Activated CD4-positive, alpha-beta memory T cell treated with anti-CD3 and anti-CD28 coated beads, Interleukin-2, amount 10 ng/mL, durations not matched to agents 7 days and 5 days (primary cell): ENCODE measurements at regions of chr1 and their contacts with region 1.

Region 1: GRCh38 chr1:52825868-52826267 is 16.7 kb upstream of the ZYG11A start:
- DNase-seq: no peak
- H3K4me3 Mint-ChIP-seq: no peak overlapping the region
- H3K27ac Mint-ChIP-seq: no peak overlapping the region
- H3K4me1 Mint-ChIP-seq: no peaks in the 10 kb centered on the region
- H3K27me3 Mint-ChIP-seq: no peaks in the 10 kb centered on the region

Region 2: GRCh38 chr1:52842643-52843309 is 16.9 kb after region 1 on chr1 and contains the start of gene ZYG11A:
- CTCF ChIA-PET with region 1: interaction called, 12 read pairs
- POLR2A ChIA-PET with region 1: no interaction called
- DNase-seq: peak; percentile 81
- H3K4me3 Mint-ChIP-seq: peak within 1 kb of the TSS; percentile 63
- H3K27ac Mint-ChIP-seq: no peak within 1 kb of the TSS
- H3K4me1 Mint-ChIP-seq: peaks cover 11% of the 10 kb centered on the region
- H3K27me3 Mint-ChIP-seq: peaks cover 23% of the 10 kb centered on the region
- total RNA-seq, gene ZYG11A: 0.25 to 0.30 TPM